ENCODE measurements at regions of chr6 and their contacts with region 1.

Region 1: DNA sequence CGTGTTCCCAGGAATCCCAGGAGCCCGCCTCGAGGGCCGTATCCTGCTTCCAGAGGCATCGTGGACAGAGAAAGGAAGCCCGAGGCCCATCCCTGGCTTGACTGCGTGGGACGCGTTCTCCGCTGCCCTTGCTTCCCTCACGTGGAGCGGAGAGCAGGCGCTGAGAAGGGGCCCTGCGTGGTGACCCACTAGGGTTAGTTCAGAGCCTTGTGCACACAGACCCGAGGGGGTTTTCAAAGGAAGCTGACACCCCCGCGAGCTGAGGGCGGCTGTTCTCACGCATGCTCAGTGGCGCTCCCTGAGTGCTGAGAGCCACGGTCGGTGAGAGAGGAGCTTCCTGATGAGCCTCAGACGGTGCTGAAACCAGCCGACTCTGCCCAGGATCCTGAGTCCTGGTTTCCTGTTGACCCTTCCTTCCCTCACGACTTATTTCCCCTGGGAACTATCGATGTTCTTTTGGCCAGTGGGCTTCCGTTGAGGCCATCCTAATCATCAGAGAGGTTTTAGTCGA is 28.9 kb upstream of the CCR6 start:
- DNase-seq: peak in 2 of 3 donors; percentile 59 to 76
- H3K4me3 ChIP-seq: peak overlapping the region in 2 of 3 experiments; percentile 13 to 57
- H3K4me3 Mint-ChIP-seq: peak overlapping the region; percentile 68 to 83
- H3K27ac ChIP-seq: peak overlapping the region; percentile 49 to 76
- H3K27ac Mint-ChIP-seq: peak overlapping the region; percentile 90 to 98 (median 94)
- H3K4me1 ChIP-seq: peaks cover 72 to 74% of the 10 kb centered on the region in 2 donors
- H3K4me1 Mint-ChIP-seq: peaks cover 73% of the 10 kb centered on the region
- H3K27me3 ChIP-seq: no peaks in the 10 kb centered on the region
- H3K27me3 Mint-ChIP-seq: peaks cover 2 to 7% (median 2%) of the 10 kb centered on the region in 3 donors
- CTCF ChIP-seq: no peak

Region 2: DNA sequence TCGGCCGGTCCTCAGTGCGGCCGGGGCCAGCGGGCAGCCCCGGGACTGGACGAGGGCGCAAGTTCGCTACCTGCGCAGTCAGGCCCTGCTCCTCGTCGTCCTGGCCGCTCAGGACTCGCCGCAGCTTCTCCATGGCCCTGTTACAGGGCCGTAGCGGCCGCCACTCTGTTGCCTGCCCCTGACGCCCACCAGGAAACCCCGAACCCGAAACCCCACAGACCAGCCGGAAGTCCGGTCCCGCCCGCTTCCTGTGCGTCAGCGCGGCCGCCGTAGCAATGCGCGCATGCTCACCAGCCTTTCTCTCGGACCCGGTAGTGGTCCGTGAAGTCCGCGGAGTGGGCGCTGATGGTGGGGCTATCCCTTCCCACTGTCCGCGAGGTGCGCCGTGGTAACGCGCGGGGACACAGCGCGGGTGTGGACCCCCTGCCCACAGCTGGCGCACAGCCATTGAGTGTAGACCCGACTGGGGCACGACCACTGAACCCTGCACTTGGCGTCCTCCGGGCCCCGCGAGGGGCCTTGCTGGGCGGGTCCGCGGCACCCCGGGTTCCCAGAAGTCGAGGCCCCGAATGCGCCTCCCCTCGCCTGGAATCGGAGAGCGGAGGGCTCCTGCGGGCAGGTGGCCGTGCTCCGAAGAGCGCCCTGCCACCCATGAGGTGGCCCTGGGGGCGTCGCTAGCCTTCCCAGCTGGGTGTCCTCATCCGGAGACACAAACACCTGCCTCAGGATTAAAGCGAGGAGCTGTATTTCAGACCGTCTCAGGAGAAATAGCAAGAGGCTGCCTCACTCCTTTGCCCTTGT is 751.4 kb before region 1 on chr6 and contains the start of gene SFT2D1:
- intact Hi-C with region 1: loop called in 1 of 2 experiments (anchors 5 kb)
- DNase-seq: peak; percentile 90 to 95 (median 92)
- H3K4me3 ChIP-seq: peak within 1 kb of the TSS; percentile 67 to 97 (median 88)
- H3K4me3 Mint-ChIP-seq: peak within 1 kb of the TSS; percentile 93 to 98
- H3K27ac ChIP-seq: peak within 1 kb of the TSS; percentile 94 to 100
- H3K27ac Mint-ChIP-seq: peak within 1 kb of the TSS; percentile 96 to 98 (median 97)
- H3K4me1 ChIP-seq: peaks cover 36 to 40% of the 10 kb centered on the region in 2 donors
- H3K4me1 Mint-ChIP-seq: peaks cover 22% of the 10 kb centered on the region
- H3K27me3 ChIP-seq: no peaks in the 10 kb centered on the region
- H3K27me3 Mint-ChIP-seq: peaks cover 0 to 1% (median 0%) of the 10 kb centered on the region in 3 donors
- CTCF ChIP-seq: no peak
- polyA plus RNA-seq, gene SFT2D1: 48.1 to 166 (median 140) TPM

Region 3: DNA sequence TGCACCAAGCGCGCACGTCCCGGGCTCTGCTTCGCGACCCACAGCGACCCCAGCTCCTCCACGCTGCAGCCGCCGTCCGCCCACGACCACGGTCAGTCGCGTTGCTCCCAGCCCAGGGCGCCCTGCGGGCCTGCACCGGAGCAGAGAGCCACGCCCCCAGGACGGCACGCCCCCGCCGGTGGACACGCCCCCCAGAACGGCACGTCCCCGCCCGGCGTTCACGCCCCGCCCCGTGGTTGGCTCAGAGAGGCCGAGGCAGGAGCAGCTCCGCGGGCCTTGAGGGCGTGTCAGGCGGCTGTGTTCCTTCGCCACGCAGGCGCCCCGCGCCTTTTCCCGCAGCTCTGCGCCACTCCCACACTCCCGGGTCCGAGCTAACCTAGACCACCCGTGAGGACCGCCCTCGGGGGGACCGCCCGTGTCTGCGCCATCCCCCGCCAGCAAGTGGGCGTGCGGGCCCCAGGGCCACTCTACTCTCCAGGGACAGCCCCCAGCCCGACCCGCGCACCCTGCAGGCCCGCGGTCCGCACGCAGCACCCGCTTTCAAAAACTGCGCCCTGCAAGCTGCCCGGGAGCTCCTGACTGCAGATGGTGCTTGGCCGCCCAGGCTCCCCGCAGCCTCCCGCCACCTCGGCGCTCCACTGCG is 137.4 kb before region 1 on chr6 and contains the start of gene RNASET2:
- intact Hi-C with region 1: loop called in 1 of 2 experiments (anchors 5 kb)
- DNase-seq: peak; percentile 88 to 93 (median 91)
- H3K4me3 ChIP-seq: peak within 1 kb of the TSS; percentile 85 to 97 (median 95)
- H3K4me3 Mint-ChIP-seq: peak within 1 kb of the TSS; percentile 93 to 97
- H3K27ac ChIP-seq: peak within 1 kb of the TSS; percentile 99 to 100
- H3K27ac Mint-ChIP-seq: peak within 1 kb of the TSS; percentile 98 to 100 (median 100)
- H3K4me1 ChIP-seq: peaks cover 70 to 80% of the 10 kb centered on the region in 2 donors
- H3K4me1 Mint-ChIP-seq: peaks cover 69% of the 10 kb centered on the region
- H3K27me3 ChIP-seq: no peaks in the 10 kb centered on the region
- H3K27me3 Mint-ChIP-seq: peaks cover 0 to 8% (median 3%) of the 10 kb centered on the region in 3 donors
- CTCF ChIP-seq: no peak
- polyA plus RNA-seq, gene RNASET2: 432 to 562 (median 493) TPM

Region 4: DNA sequence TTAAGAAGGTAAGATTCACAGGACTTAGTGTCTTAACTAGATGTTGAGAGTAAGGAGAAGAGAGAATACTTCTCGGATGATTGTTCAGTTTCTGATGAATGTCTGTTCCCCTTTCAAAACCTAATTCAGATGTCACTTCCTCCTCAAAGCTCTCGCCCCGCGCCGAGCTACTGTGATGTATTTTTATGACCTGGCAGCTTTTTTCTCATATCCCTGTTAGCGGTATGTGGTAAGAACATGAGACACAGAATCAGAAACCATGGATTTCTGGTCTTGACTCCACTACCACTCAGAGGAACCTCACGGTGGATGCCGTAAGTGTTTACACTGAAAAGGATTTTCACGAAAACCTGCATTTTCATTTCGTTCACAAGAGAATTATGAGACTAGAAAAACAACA is 46.4 kb before region 1 on chr6:
- intact Hi-C with region 1: loop called in 1 of 2 experiments (anchors 10 kb)
- DNase-seq: peak; percentile 88 to 90 (median 90)
- H3K4me3 ChIP-seq: peak overlapping the region; percentile 2 to 66 (median 36)
- H3K4me3 Mint-ChIP-seq: peak overlapping the region; percentile 49 to 85
- H3K27ac ChIP-seq: peak overlapping the region; percentile 85
- H3K27ac Mint-ChIP-seq: peak overlapping the region; percentile 92 to 98 (median 95)
- H3K4me1 ChIP-seq: peaks cover 22 to 25% of the 10 kb centered on the region in 2 donors
- H3K4me1 Mint-ChIP-seq: peaks cover 26% of the 10 kb centered on the region
- H3K27me3 ChIP-seq: no peaks in the 10 kb centered on the region
- H3K27me3 Mint-ChIP-seq: peaks cover 0 to 2% (median 2%) of the 10 kb centered on the region in 3 donors
- CTCF ChIP-seq: no peak

Region 5: DNA sequence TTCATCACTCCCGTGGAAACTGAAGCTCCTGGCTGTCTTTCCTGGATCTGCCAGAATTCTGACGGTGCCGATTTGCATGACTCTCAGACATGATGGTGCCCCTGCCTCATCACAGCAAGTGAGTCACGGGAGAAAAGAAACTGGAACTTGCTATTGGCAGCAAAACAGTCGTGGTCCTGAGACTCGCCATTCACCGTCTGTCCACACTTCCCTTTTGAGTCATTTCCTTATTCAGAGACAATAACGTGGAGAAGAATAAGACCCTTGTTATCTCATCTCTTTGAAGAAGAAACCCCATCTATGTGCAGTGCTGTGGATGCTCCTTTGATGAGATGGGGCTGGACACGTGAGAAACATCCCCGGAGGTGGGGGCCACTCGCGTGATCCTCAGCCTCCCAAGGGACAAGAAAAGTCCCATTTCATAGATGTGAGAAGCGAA is 59.6 kb after region 1 on chr6:
- intact Hi-C with region 1: loop called in 1 of 2 experiments (anchors 5 kb)
- DNase-seq: peak; percentile 86 to 95 (median 92)
- H3K4me3 ChIP-seq: peak overlapping the region in 2 of 3 experiments; percentile 4 to 24
- H3K4me3 Mint-ChIP-seq: peak overlapping the region; percentile 56 to 79
- H3K27ac ChIP-seq: peak overlapping the region in 1 of 2 donors; percentile 69
- H3K27ac Mint-ChIP-seq: peak overlapping the region; percentile 57 to 92 (median 80)
- H3K4me1 ChIP-seq: peaks cover 17 to 31% of the 10 kb centered on the region in 2 donors
- H3K4me1 Mint-ChIP-seq: peaks cover 37% of the 10 kb centered on the region
- H3K27me3 ChIP-seq: no peaks in the 10 kb centered on the region
- H3K27me3 Mint-ChIP-seq: peaks cover 0 to 3% (median 2%) of the 10 kb centered on the region in 3 donors
- CTCF ChIP-seq: no peak

Measured in CD14-positive monocyte (primary cell).